Posterior vena cava (tissue), 2 donors: ENCODE measurements at regions of chr2 and their contacts with region 1.

Region 1: GRCh38 chr2:145199042-145199441 is 679.1 kb upstream of the ZEB2 start:
- DNase-seq: no peak

Region 2: DNA sequence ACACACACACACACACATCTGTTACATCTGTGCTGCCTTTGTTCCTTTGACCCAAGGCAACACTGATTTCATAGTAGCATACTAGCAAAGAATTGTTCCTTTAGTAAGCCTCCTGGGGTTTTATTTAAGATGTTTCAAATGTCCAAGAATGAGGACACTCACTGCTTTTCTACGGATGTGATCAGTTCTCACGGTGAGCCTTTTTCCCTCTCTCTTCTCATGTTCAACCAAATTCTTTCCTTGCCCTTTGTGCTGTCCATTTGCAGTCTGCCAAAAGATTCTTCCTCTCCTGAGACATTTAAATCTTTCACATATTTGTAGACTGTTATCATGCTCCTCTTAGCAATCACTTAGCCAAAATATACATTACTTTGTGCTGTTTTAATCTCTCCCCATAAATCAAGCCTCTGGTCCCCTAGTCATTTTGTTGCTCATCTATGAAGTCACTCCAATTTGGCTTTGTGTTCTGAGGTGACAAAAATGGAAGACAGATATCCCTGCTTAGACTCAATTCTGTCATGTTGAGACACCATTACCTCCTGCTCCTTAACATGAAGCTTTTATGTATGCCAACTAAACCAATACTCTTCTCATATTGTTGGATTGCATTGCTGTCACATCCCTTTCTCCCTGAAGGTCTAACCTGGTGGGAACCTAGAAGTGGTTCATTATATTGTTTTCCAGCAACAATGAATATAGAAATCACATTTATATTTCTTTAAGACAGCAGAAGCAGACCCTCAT is 1040.5 kb after region 1 on chr2:
- intact Hi-C with region 1: loop called in 1 of 2 experiments (anchors 5 kb)
- DNase-seq: no peak